GM18951 (cell line): ENCODE measurements at regions of chr9 and their contacts with region 1.

Region 1: DNA sequence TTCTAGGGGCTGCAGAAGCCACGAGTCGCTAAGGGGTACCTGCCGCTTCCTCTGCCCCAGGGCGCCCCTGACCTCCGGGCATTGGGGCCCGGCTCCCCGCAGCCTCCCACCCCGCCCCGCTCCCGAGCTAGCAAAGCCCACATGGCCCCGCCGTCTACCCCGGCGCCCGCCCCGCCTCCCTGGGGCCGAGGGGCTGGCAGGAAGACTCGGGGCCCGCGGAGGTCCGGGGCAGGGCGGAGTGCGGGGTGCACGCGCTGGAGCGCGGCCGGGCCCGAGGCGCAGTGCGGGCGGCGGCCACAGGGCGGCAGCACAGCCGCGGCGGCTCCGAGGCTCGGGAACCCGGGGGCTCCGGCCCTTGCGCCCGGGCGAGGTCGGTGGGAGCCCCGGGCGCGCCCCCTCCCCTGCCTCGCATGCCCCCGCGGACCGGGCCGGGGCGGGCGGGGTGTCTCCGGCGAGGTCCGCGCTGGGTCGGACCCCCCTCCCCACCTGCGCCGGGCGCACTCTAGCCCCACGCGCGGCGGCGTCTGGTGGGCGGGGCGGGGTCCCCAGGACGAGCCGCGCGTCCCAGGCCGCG is 6.7 kb downstream of the NRARP start:
- POLR2A ChIP-seq: no peak

Region 2: GRCh38 chr9:137138722-137139467 is 156.4 kb before region 1 on chr9 and contains the start of gene GRIN1:
- in situ Hi-C with region 1: no loop called
- POLR2A ChIP-seq: no peak

Region 3: DNA sequence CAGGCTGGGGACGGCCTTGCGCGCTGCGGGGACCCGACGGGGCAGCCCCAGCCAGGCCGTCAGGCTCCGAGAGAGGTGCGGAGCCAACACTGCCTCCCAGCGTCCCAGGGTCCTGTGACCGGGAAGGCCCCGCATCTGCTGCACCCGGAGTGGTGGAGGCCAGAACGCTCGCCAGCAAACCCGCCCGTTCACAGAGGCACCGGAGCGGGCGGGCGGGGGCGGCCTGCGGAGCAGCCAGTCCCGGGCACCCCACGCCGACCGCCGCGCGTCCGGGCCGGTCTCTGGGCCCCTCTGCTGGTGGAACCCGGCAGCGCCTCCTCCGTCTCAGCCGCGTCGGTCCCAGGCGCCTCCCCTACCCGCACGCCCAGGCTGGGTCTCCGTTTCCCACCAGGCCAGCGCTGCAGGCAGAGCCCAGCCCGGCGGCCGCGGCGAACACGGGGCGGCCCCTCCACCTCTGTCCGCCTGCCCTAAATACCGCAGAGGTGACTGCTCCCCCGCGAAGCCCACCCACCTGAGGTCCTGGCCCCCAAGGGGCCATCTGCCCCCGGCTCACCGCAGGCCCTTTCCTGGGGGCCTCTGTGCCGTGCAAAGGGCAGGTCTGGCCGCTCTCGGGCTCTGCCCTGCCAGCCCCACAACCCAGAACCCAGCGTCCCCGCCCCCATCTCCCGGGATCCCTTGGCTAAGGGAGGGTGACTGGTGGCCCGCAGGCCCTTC is 111.7 kb after region 1 on chr9:
- in situ Hi-C with region 1: loop called (anchors 10 kb)
- POLR2A ChIP-seq: no peak

Region 4: DNA sequence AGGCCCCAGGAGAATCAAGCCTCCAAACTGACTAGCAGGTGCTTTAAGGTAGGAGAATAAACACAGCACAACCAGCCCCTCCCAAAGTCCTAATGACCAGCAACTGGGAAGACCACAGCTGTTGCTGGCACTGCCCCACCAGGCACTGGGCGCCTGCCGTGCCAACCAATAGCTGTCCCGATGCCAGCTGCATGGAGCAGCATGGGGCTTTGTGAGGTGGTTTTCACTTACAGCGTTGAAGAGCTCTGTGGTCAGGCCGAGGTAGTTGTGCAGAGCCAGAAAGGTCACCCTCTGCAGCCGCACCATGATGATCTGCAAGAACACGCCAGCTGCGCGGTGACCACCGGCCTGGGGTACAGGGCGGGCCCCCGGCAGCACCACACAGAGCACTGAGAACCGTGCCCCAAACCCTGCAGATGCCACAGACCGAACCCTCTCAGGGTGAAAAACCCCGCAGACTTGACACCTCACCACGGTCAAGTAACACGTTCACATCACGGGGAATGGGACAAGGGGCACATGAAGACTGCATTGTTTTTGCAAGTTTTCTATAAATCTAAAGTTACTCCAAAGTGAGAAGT is 226.2 kb after region 1 on chr9:
- in situ Hi-C with region 1: loop called (anchors 10 kb)
- POLR2A ChIP-seq: no peak